HepG2 (cell line): ENCODE measurements at regions of chr5 and their contacts with region 1.

Region 1: DNA sequence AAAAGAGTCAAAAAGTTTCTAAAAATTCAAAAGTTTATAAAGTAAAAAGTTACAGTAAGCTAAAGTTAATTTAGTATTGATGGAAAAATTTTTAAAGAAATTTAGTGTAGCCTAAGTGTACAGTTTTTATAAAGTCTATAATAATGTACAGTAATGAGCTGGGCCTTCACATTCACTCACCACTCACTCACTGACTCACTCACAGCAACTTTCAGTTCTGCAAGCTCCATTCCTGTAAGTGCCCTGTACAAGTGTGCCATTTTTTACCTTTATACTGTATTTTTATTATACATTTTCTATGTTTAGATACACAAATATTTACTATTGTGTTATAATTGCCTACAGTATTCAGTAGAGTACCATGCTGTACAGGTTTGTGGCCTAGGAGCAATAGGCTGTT is 239.5 kb upstream of the MAP3K1 start:
- DNase-seq: no peak
- ATAC-seq: no peak
- H3K4me3 ChIP-seq: no peak overlapping the region
- H3K27ac ChIP-seq: no peak overlapping the region
- H3K4me1 ChIP-seq: no peaks in the 10 kb centered on the region
- H3K27me3 ChIP-seq: 0 out of 5 replicates have a peak, but pooled peaks cover 0 to 1% of the 10 kb centered on the region in 2 experiments
- CTCF ChIP-seq: no peak
- EP300 ChIP-seq: no peak
- POLR2A ChIP-seq: no peak
- RAD21 ChIP-seq: no peak

Region 2: DNA sequence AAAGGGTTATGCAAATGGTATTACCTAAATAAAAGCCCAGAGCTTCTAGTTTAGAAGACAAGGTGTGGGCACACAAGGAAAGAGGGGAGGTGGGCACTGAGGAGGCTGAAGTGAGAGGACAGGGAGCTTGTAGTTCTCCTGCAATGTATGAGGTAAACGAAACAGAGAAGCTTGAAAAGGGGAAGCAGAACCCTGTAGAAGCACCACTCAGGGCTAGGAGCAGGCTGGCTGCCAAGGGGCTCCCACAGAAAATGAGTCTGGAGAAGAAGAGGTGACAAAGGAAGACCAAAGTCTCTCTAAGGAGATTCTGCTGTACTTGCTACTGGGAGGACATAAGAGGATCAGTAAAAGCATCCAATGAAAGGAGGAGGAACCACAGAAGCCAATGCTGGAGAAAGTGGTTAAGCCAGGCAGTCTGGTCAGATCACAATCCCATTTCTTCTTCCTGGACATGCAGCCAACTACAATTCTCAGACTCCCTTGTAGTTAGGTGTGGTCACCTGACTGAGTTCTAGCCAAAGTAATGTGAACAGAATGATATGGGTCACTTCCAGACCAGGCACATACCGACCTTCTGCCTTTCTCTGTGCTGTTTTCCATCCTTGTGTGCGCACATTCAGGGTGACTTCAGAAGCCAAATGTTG is 65.1 kb after region 1 on chr5:
- CTCF ChIA-PET with region 1: no interaction called
- POLR2A ChIA-PET with region 1: no interaction called
- in situ Hi-C with region 1: no loop called
- intact Hi-C with region 1: no loop called
- DNase-seq: no peak
- ATAC-seq: no peak
- H3K4me3 ChIP-seq: no peak overlapping the region
- H3K27ac ChIP-seq: no peak overlapping the region
- H3K4me1 ChIP-seq: peaks cover 59% of the 10 kb centered on the region
- H3K27me3 ChIP-seq: no peaks in the 10 kb centered on the region
- CTCF ChIP-seq: no peak
- EP300 ChIP-seq: no peak
- POLR2A ChIP-seq: no peak
- RAD21 ChIP-seq: no peak

Region 3: GRCh38 chr5:56698463-56699381 is 122.9 kb after region 1 on chr5:
- CTCF ChIA-PET with region 1: no interaction called
- POLR2A ChIA-PET with region 1: no interaction called
- in situ Hi-C with region 1: no loop called
- intact Hi-C with region 1: no loop called
- DNase-seq: no peak
- ATAC-seq: no peak
- H3K4me3 ChIP-seq: no peak overlapping the region
- H3K27ac ChIP-seq: no peak overlapping the region
- H3K4me1 ChIP-seq: 0 out of 2 replicates have a peak, but pooled peaks cover 7% of the 10 kb centered on the region
- H3K27me3 ChIP-seq: peaks cover 1 to 24% of the 10 kb centered on the region in 2 experiments; a peak in 3 of 5 replicates
- CTCF ChIP-seq: no peak
- EP300 ChIP-seq: no peak
- POLR2A ChIP-seq: no peak
- RAD21 ChIP-seq: no peak

Region 4: DNA sequence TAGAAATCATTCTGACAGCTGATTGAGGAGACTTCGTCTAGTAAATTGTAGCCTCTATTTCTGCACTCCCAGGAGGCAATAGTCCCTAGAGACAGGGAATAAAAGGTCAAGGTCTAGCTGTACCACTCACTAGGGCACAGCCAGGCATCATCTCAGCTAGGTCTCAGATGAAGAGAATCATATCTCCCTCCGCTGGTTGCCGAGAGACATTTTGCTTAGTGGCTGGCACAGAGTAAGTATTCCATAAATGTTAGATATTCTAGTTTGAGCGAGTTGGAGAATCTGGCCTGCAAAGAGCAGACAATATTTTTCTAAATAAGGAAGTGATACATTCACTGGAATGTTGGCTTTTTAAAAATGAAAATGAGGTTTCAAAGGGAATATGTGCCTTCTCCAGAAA is 1087.2 kb after region 1 on chr5:
- CTCF ChIA-PET with region 1: no interaction called
- POLR2A ChIA-PET with region 1: no interaction called
- in situ Hi-C with region 1: no loop called
- intact Hi-C with region 1: loop called (anchors 5 kb)
- DNase-seq: no peak
- ATAC-seq: no peak
- H3K4me3 ChIP-seq: no peak overlapping the region
- H3K27ac ChIP-seq: no peak overlapping the region
- H3K4me1 ChIP-seq: no peaks in the 10 kb centered on the region
- H3K27me3 ChIP-seq: no peaks in the 10 kb centered on the region
- CTCF ChIP-seq: no peak
- EP300 ChIP-seq: no peak
- POLR2A ChIP-seq: no peak
- RAD21 ChIP-seq: no peak